HepG2 (cell line): ENCODE measurements at regions of chr4 and their contacts with region 1.

Region 1: GRCh38 chr4:127491571-127491970 is 141.2 kb upstream of the INTU start:
- DNase-seq: no peak
- ATAC-seq: no peak
- H3K4me3 ChIP-seq: no peak overlapping the region
- H3K27ac ChIP-seq: no peak overlapping the region
- H3K4me1 ChIP-seq: no peaks in the 10 kb centered on the region
- H3K27me3 ChIP-seq: no peaks in the 10 kb centered on the region
- CTCF ChIP-seq: no peak
- EP300 ChIP-seq: no peak
- POLR2A ChIP-seq: no peak
- RAD21 ChIP-seq: no peak

Region 2: GRCh38 chr4:128757712-128758111 is 1266.1 kb after region 1 on chr4:
- CTCF ChIA-PET with region 1: no interaction called
- POLR2A ChIA-PET with region 1: no interaction called
- in situ Hi-C with region 1: no loop called
- intact Hi-C with region 1: loop called (anchors 10 kb)
- DNase-seq: no peak
- ATAC-seq: no peak
- H3K4me3 ChIP-seq: no peak overlapping the region
- H3K27ac ChIP-seq: no peak overlapping the region
- H3K4me1 ChIP-seq: no peaks in the 10 kb centered on the region
- H3K27me3 ChIP-seq: no peaks in the 10 kb centered on the region
- CTCF ChIP-seq: no peak
- EP300 ChIP-seq: no peak
- POLR2A ChIP-seq: no peak
- RAD21 ChIP-seq: no peak